ENCODE measurements at regions of chr1 and their contacts with region 1.

Region 1: GRCh38 chr1:230978491-230979388 is at the starts of genes ARV1 and TTC13:
- DNase-seq: peak; percentile 99
- H3K4me3 ChIP-seq: peak within 1 kb of the TSS; percentile 93
- H3K27ac ChIP-seq: peak within 1 kb of the TSS; percentile 68
- H3K4me1 ChIP-seq: peaks cover 22% of the 10 kb centered on the region
- CTCF ChIP-seq: peak; percentile 76
- total RNA-seq, gene ARV1: 11.7 and 15.1 TPM in 2 replicates
- total RNA-seq, gene TTC13: 15.4 and 24.3 TPM in 2 replicates

Region 2: GRCh38 chr1:230642263-230642959 is 336.3 kb before region 1 on chr1 and contains the start of gene COG2:
- CTCF ChIA-PET with region 1: no interaction called
- POLR2A ChIA-PET with region 1: no interaction called
- intact Hi-C with region 1: loop called (anchors 2 kb)
- DNase-seq: peak; percentile 95
- H3K4me3 ChIP-seq: peak within 1 kb of the TSS; percentile 82
- H3K27ac ChIP-seq: peak within 1 kb of the TSS; percentile 41
- H3K4me1 ChIP-seq: peaks cover 18% of the 10 kb centered on the region
- CTCF ChIP-seq: peak; percentile 89
- total RNA-seq, gene COG2: 30.5 and 47.9 TPM in 2 replicates

Region 3: DNA sequence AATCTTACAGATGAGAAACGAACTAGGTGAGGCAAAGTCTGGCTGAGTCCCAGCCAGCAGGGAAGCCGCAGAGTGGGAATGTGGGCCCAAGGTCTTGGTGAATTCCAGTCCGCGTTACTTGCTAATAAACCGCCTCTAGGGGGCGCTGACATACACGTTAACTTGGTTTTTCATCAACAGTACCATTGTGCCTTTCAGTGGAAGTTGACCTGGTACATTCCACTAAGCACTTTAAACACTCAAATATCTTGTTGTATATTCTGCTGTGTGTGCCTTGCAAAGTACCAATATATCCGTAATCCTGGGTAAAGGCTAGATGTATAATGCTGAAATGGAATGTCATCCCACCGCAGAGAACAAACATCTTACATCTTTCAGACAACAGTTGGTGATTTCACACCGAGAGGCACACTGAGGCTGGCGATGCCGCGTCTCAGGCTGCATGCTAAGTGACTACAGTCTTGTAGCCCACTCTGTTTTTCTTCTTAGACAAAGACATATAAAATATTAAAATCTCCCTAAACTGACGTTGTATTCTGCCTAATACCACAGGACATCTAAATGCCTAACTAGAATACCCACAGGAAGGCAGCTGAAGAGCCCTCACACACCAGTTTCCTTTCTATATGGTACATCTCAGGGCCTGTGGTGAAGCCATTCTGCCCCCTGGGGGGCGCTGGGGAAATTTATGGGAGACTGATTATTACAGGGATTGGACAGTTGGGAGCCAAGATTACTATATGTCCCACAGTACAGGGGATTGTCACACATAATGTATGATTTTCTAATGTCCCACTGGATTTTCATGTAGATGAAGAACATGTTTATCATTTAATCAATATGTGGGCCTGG is 61.2 kb before region 1 on chr1:
- CTCF ChIA-PET with region 1: no interaction called
- POLR2A ChIA-PET with region 1: no interaction called
- intact Hi-C with region 1: loop called (anchors 1 kb)
- DNase-seq: peak; percentile 84
- H3K4me3 ChIP-seq: no peak overlapping the region
- H3K27ac ChIP-seq: no peak overlapping the region
- H3K4me1 ChIP-seq: no peaks in the 10 kb centered on the region
- CTCF ChIP-seq: peak; percentile 90

Region 4: GRCh38 chr1:231039161-231040018 is 60.6 kb after region 1 on chr1:
- CTCF ChIA-PET with region 1: interaction called, 3 read pairs
- POLR2A ChIA-PET with region 1: no interaction called
- intact Hi-C with region 1: loop called (anchors 2 kb)
- DNase-seq: peak; percentile 21
- H3K4me3 ChIP-seq: peak overlapping the region; percentile 74
- H3K27ac ChIP-seq: no peak overlapping the region
- H3K4me1 ChIP-seq: peaks cover 4% of the 10 kb centered on the region
- CTCF ChIP-seq: no peak

Region 5: DNA sequence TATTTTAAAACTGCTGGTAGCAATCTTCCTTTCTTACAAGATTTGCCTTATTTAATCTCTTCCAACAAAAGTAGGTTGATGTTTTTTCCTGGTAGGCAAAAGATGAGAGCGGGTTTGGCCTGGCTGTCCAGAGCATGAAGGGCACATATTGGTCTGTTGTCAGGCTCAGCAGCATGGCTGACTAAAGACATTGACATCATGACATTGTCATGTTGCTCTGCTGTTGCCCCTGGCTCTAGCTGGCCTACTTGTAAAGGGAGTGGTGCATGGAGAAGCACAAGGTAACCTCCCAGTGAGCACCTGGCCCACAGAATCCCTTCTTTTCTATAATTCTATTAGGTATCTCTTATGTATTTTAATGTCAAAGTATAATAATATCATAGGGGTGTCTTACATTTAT is 285.9 kb after region 1 on chr1:
- CTCF ChIA-PET with region 1: no interaction called
- POLR2A ChIA-PET with region 1: no interaction called
- intact Hi-C with region 1: no loop called
- DNase-seq: no peak
- H3K4me3 ChIP-seq: no peak overlapping the region
- H3K27ac ChIP-seq: no peak overlapping the region
- H3K4me1 ChIP-seq: no peaks in the 10 kb centered on the region
- CTCF ChIP-seq: no peak

Region 6: GRCh38 chr1:231612393-231613089 is 633.8 kb after region 1 on chr1:
- CTCF ChIA-PET with region 1: no interaction called
- POLR2A ChIA-PET with region 1: interaction called, 3 read pairs
- intact Hi-C with region 1: loop called (anchors 5 kb)
- DNase-seq: peak; percentile 78
- H3K4me3 ChIP-seq: peak overlapping the region; percentile 41
- H3K27ac ChIP-seq: peak overlapping the region; percentile 26
- H3K4me1 ChIP-seq: peaks cover 24% of the 10 kb centered on the region
- CTCF ChIP-seq: no peak